Activated B cell treated with CpG ODN at 0.5 μM for 24 hours (primary cell): ENCODE measurements at regions of chr5 and their contacts with region 1.

Region 1: DNA sequence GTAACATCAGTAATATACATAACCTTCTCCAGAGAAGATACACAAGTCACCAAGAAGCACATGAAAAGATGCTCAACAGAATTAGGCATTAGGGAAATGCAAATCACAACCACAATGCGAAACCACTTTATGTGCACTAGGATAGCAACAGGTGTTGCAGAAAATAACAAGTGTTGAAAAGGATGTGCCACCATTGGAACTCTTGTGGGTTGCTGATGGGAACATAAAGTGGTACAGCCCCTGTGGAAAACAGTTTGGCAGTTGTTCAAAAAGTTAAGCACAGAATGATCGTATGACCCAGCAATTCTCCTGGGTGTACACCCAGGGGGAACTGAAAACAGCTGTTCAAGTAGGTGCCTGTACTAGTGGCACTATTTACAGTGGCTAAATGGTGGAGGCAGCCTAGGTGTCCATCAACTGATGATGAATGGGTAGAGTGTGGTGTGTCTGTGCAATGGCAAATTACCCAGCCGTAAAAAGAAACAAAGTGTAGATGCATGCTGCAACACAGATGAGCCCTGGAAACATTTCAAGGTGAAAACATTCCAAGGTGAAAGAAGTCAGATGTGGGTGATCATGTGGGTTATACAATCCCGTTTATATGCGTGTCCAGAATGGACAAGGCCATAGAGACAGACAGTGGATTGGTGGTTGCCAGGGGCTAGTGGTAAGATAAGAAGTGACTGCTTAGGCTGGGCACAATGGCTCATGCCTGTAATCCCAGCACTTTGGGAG is 27.2 kb downstream of the CCDC69 start:
- DNase-seq: peak; percentile 31
- ATAC-seq: peak; percentile 95
- H3K4me3 Mint-ChIP-seq: peak overlapping the region; percentile 29
- H3K27ac Mint-ChIP-seq: peak overlapping the region; percentile 84
- H3K4me1 Mint-ChIP-seq: peaks cover 75% of the 10 kb centered on the region
- H3K27me3 Mint-ChIP-seq: no peaks in the 10 kb centered on the region
- CTCF ChIP-seq: no peak

Region 2: GRCh38 chr5:151174612-151175101 is 22.1 kb before region 1 on chr5:
- CTCF ChIA-PET with region 1: no interaction called
- POLR2A ChIA-PET with region 1: interaction called, 6 read pairs
- intact Hi-C with region 1: loop called (anchors 2 kb)
- DNase-seq: no peak
- ATAC-seq: no peak
- H3K4me3 Mint-ChIP-seq: no peak overlapping the region
- H3K27ac Mint-ChIP-seq: no peak overlapping the region
- H3K4me1 Mint-ChIP-seq: peaks cover 58% of the 10 kb centered on the region
- H3K27me3 Mint-ChIP-seq: no peaks in the 10 kb centered on the region
- CTCF ChIP-seq: no peak

Region 3: GRCh38 chr5:151463137-151464029 is 266.7 kb after region 1 on chr5:
- CTCF ChIA-PET with region 1: no interaction called
- POLR2A ChIA-PET with region 1: no interaction called
- intact Hi-C with region 1: no loop called
- DNase-seq: no peak
- ATAC-seq: no peak
- H3K4me3 Mint-ChIP-seq: no peak overlapping the region
- H3K27ac Mint-ChIP-seq: no peak overlapping the region
- H3K4me1 Mint-ChIP-seq: no peaks in the 10 kb centered on the region
- H3K27me3 Mint-ChIP-seq: no peaks in the 10 kb centered on the region
- CTCF ChIP-seq: no peak